PC-3 (cell line): ENCODE measurements at regions of chr2 and their contacts with region 1.

Region 1: DNA sequence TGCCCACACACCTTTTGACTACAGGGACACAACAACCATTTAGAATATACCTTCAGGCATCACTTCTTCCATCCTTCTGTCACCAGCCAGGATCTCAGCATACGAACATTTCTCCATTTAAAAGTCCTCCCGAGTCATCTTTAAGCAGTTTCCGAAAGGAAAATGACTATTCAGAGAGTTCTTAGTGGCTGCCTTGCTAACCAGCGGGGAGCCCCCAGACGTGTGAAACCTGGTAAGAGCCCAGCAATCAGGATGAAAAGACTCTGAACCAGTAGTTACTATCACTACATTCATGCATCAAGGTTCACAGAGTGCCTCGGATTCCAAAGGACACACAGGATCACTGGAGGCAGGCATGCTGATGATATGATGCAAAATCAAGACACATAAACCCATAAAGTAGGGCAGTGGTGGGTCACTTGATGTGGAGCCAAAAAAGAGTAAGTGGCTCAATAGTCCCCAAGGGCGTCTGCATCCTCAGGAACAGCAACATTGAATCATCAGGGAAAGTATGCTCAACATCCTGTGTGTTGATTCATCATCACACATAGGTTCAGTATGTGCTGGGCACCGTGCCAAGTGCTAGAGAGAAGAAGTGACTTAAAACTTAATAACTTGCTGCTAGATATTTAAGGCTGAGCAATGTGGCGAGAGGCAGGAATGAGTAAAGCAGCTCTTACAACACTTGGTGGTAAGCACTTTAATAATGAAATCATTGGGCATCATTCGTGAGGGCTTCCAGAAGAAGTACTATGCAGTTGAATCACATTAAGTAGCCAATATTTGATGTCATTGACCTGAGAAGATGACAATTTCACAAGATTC is 4.4 kb downstream of the CCL20 start:
- DNase-seq: peak; percentile 99
- ATAC-seq: peak; percentile 87
- H3K4me3 ChIP-seq: peak overlapping the region; percentile 52
- H3K27ac ChIP-seq: peak overlapping the region; percentile 98
- H3K4me1 ChIP-seq: peaks cover 42% of the 10 kb centered on the region
- H3K27me3 ChIP-seq: no peaks in the 10 kb centered on the region
- CTCF ChIP-seq: no peak

Region 2: GRCh38 chr2:227796045-227796711 is 21.9 kb before region 1 on chr2:
- CTCF ChIA-PET with region 1: no interaction called
- POLR2A ChIA-PET with region 1: no interaction called
- intact Hi-C with region 1: loop called (anchors 1 kb)
- DNase-seq: peak; percentile 84
- ATAC-seq: peak; percentile 91
- H3K4me3 ChIP-seq: peak overlapping the region; percentile 2; the same call in 1 of the 2 replicates
- H3K27ac ChIP-seq: peak overlapping the region; percentile 9; the same call in 1 of the 2 replicates
- H3K4me1 ChIP-seq: peaks cover 15% of the 10 kb centered on the region
- H3K27me3 ChIP-seq: no peaks in the 10 kb centered on the region
- CTCF ChIP-seq: no peak

Region 3: GRCh38 chr2:227877421-227878310 is 59.6 kb after region 1 on chr2:
- CTCF ChIA-PET with region 1: no interaction called
- POLR2A ChIA-PET with region 1: no interaction called
- intact Hi-C with region 1: loop called (anchors 2 kb)
- DNase-seq: peak; percentile 29
- ATAC-seq: peak; percentile 55
- H3K4me3 ChIP-seq: no peak overlapping the region
- H3K27ac ChIP-seq: peak overlapping the region; percentile 75
- H3K4me1 ChIP-seq: peaks cover 53% of the 10 kb centered on the region
- H3K27me3 ChIP-seq: no peaks in the 10 kb centered on the region
- CTCF ChIP-seq: no peak

Region 4: GRCh38 chr2:227906991-227907390 is 88.9 kb after region 1 on chr2:
- CTCF ChIA-PET with region 1: no interaction called
- POLR2A ChIA-PET with region 1: no interaction called
- intact Hi-C with region 1: no loop called
- DNase-seq: no peak
- ATAC-seq: no peak
- H3K4me3 ChIP-seq: no peak overlapping the region
- H3K27ac ChIP-seq: no peak overlapping the region
- H3K4me1 ChIP-seq: peaks cover 8% of the 10 kb centered on the region; the same call in 1 of the 2 replicates
- H3K27me3 ChIP-seq: no peaks in the 10 kb centered on the region
- CTCF ChIP-seq: no peak

Region 5: GRCh38 chr2:228072669-228073068 is 254.6 kb after region 1 on chr2:
- CTCF ChIA-PET with region 1: no interaction called
- POLR2A ChIA-PET with region 1: no interaction called
- intact Hi-C with region 1: no loop called
- DNase-seq: no peak
- ATAC-seq: no peak
- H3K4me3 ChIP-seq: no peak overlapping the region
- H3K27ac ChIP-seq: no peak overlapping the region
- H3K4me1 ChIP-seq: no peaks in the 10 kb centered on the region
- H3K27me3 ChIP-seq: peaks cover 29% of the 10 kb centered on the region
- CTCF ChIP-seq: no peak